ENCODE measurements at regions of chr2 and their contacts with region 1.

Region 1: DNA sequence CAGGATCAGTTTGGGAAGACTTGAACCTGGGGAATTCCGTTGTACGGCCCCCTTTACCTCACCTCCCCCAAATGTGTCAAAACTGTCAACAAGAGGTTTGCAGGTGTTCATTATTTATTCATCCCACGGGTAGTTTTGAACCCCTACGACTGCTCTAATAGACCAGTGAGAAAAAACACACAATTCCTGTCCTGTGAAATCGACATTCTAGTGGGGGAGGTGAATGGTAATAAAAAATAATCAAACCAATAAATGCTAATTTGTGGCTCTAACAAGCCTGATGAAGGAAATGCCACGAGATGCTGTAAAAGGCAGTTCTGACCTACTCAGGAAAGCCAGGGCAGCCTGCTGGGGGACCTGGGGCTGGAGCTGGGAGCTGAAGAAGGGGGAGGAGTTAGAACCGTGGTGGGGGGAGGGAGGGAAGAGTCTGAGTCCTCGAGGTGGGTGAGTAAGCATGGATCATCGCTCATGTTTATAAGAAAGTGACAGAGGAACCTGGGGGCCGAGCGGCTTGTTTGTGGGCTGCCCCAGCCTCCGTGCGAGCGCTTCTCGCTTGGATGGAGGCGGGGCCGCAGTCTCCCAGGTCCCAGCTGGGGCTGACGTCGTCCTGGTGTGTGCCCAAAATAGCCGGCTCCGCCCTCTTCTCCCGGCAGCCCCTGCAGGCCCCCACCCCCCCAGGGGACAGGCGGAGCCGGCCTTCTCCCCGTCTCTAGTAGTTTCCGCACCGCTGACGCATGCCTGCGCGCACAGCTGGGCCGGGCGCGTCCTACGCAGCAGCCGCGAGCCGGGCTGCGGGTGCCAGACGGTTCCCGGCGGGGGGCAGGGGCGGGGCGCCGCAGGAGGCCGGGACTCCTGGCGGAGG is at the start of gene DNAJB2:
- DNase-seq: peak; percentile 98
- H3K4me3 ChIP-seq: peak within 1 kb of the TSS; percentile 85
- H3K4me3 Mint-ChIP-seq: peak within 1 kb of the TSS; percentile 98
- H3K27ac Mint-ChIP-seq: peak within 1 kb of the TSS; percentile 98
- H3K4me1 ChIP-seq: peaks cover 36% of the 10 kb centered on the region
- H3K4me1 Mint-ChIP-seq: peaks cover 13% of the 10 kb centered on the region
- H3K27me3 ChIP-seq: no peaks in the 10 kb centered on the region
- H3K27me3 Mint-ChIP-seq: no peaks in the 10 kb centered on the region
- CTCF ChIP-seq: no peak
- total RNA-seq, gene DNAJB2: 60.6 and 61.2 TPM in 2 replicates

Region 2: GRCh38 chr2:219177552-219178376 is 101.1 kb before region 1 on chr2 and contains the start of gene RETREG2:
- CTCF ChIA-PET with region 1: interaction called, 4 read pairs
- POLR2A ChIA-PET with region 1: interaction called, 6 read pairs
- intact Hi-C with region 1: loop called (anchors 5 kb)
- DNase-seq: peak; percentile 89 to 90
- H3K4me3 ChIP-seq: peak within 1 kb of the TSS; percentile 93
- H3K4me3 Mint-ChIP-seq: peak within 1 kb of the TSS; percentile 90
- H3K27ac Mint-ChIP-seq: peak within 1 kb of the TSS; percentile 89
- H3K4me1 ChIP-seq: peaks cover 12% of the 10 kb centered on the region
- H3K4me1 Mint-ChIP-seq: peaks cover 18% of the 10 kb centered on the region
- H3K27me3 ChIP-seq: no peaks in the 10 kb centered on the region; the same call in 1 of the 2 replicates
- H3K27me3 Mint-ChIP-seq: no peaks in the 10 kb centered on the region
- CTCF ChIP-seq: peak; percentile 17 to 38
- total RNA-seq, gene RETREG2: 59.5 and 62.0 TPM in 2 replicates

Region 3: GRCh38 chr2:219229305-219230058 is 49.4 kb before region 1 on chr2 and contains the starts of genes ANKZF1 and ATG9A:
- CTCF ChIA-PET with region 1: interaction called, 3 read pairs
- POLR2A ChIA-PET with region 1: interaction called, 6 read pairs
- intact Hi-C with region 1: loop called (anchors 1 kb)
- DNase-seq: peak; percentile 99
- H3K4me3 ChIP-seq: peak within 1 kb of the TSS; percentile 69
- H3K4me3 Mint-ChIP-seq: peak within 1 kb of the TSS; percentile 100
- H3K27ac Mint-ChIP-seq: peak within 1 kb of the TSS; percentile 100
- H3K4me1 ChIP-seq: 0 out of 2 replicates have a peak, but pooled peaks cover 4% of the 10 kb centered on the region
- H3K4me1 Mint-ChIP-seq: no peaks in the 10 kb centered on the region
- H3K27me3 ChIP-seq: no peaks in the 10 kb centered on the region
- H3K27me3 Mint-ChIP-seq: no peaks in the 10 kb centered on the region
- CTCF ChIP-seq: no peak
- total RNA-seq, gene ANKZF1: 50.7 and 51.5 TPM in 2 replicates
- total RNA-seq, gene ATG9A: 59.6 and 62.9 TPM in 2 replicates

Region 4: DNA sequence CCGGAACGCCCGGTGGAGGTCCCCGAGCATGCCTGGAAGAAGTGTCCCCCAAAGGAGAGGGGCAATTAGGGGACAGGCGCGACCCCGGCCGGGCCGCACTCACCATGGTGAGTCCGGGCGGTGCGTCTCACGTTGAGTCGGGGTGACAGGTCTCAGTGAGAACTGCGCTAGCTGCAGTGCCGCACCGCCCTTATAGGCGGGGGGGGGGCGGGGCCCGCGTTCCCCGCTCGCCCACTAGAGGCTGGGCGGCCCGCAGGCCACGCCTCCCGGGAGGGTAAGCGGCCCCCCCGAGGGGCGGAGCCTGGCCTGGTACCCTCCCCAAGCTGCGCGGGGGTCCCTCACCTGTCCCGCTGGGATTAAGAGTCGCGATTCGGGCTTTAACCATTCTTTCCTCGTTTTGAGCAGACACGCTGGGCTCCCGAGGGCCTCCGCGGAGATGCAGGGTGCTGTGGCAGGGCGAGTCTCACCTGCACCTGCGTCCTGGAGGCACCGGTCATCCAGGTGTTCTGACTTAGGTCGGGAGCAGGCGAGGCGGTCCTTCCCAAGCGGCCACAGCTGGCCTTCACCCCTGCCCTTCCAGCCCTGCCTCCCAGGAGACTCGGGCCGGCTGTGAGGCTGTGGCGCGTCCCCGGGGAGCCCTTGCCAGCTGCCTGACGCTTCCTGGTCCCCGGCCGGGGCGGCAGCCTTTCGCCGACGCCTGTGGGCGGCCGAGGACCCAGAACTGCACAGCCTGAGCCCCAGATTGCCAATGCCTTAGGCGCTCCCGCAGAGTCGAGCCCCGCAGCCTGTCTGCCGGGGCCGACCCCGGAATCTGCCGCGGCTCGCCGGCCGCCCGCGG is 24.9 kb before region 1 on chr2 and contains the start of gene TUBA4A:
- CTCF ChIA-PET with region 1: interaction called, 25 read pairs
- POLR2A ChIA-PET with region 1: interaction called, 12 read pairs
- intact Hi-C with region 1: loop called (anchors 1 kb)
- DNase-seq: peak; percentile 81 to 89
- H3K4me3 ChIP-seq: peak within 1 kb of the TSS; percentile 48
- H3K4me3 Mint-ChIP-seq: peak within 1 kb of the TSS; percentile 62
- H3K27ac Mint-ChIP-seq: no peak within 1 kb of the TSS
- H3K4me1 ChIP-seq: peaks cover 20% of the 10 kb centered on the region
- H3K4me1 Mint-ChIP-seq: peaks cover 27% of the 10 kb centered on the region
- H3K27me3 ChIP-seq: no peaks in the 10 kb centered on the region
- H3K27me3 Mint-ChIP-seq: peaks cover 4% of the 10 kb centered on the region
- CTCF ChIP-seq: no peak
- total RNA-seq, gene TUBA4A: 14.9 and 15.6 TPM in 2 replicates

Region 5: GRCh38 chr2:219268294-219268693 is 10.6 kb before region 1 on chr2:
- CTCF ChIA-PET with region 1: interaction called, 10 read pairs
- POLR2A ChIA-PET with region 1: interaction called, 18 read pairs
- intact Hi-C with region 1: no loop called
- DNase-seq: no peak
- H3K4me3 ChIP-seq: no peak overlapping the region
- H3K4me3 Mint-ChIP-seq: no peak overlapping the region
- H3K27ac Mint-ChIP-seq: no peak overlapping the region
- H3K4me1 ChIP-seq: peaks cover 7% of the 10 kb centered on the region
- H3K4me1 Mint-ChIP-seq: peaks cover 5% of the 10 kb centered on the region
- H3K27me3 ChIP-seq: no peaks in the 10 kb centered on the region
- H3K27me3 Mint-ChIP-seq: no peaks in the 10 kb centered on the region
- CTCF ChIP-seq: no peak

Region 6: GRCh38 chr2:219484343-219485200 is 205.7 kb after region 1 on chr2:
- CTCF ChIA-PET with region 1: no interaction called
- POLR2A ChIA-PET with region 1: no interaction called
- intact Hi-C with region 1: no loop called
- DNase-seq: no peak
- H3K4me3 ChIP-seq: peak overlapping the region; percentile 16
- H3K4me3 Mint-ChIP-seq: peak overlapping the region; percentile 49
- H3K27ac Mint-ChIP-seq: no peak overlapping the region
- H3K4me1 ChIP-seq: peaks cover 11% of the 10 kb centered on the region; the same call in 1 of the 2 replicates
- H3K4me1 Mint-ChIP-seq: no peaks in the 10 kb centered on the region
- H3K27me3 ChIP-seq: peaks cover 3% of the 10 kb centered on the region
- H3K27me3 Mint-ChIP-seq: peaks cover 8% of the 10 kb centered on the region
- CTCF ChIP-seq: no peak

Region 7: DNA sequence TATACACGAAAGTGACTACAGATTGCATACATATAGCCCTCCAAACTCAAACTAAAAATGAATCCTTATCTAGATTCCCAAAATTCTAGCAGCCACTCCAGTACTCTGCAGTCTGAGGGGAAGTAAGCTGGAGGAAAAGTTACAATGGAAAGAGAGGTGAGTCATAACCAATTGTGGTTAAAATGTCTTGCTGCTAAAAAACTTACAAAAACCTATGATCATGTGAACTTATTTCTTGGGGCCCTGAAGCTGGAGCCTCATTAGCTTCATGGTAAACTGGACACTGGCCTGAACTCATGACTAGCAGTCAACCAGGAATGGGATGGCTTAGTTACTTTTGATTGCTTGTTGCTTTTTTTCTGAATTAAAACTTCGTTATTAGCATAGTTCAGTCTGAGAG is 524.4 kb after region 1 on chr2:
- CTCF ChIA-PET with region 1: no interaction called
- POLR2A ChIA-PET with region 1: no interaction called
- intact Hi-C with region 1: no loop called
- DNase-seq: no peak
- H3K4me3 ChIP-seq: no peak overlapping the region
- H3K4me3 Mint-ChIP-seq: no peak overlapping the region
- H3K27ac Mint-ChIP-seq: no peak overlapping the region
- H3K4me1 ChIP-seq: no peaks in the 10 kb centered on the region
- H3K4me1 Mint-ChIP-seq: no peaks in the 10 kb centered on the region
- H3K27me3 ChIP-seq: no peaks in the 10 kb centered on the region
- H3K27me3 Mint-ChIP-seq: peaks cover 2% of the 10 kb centered on the region
- CTCF ChIP-seq: no peak